T-cell (primary cell): ENCODE measurements at regions of chr10 and their contacts with region 1.

Region 1: DNA sequence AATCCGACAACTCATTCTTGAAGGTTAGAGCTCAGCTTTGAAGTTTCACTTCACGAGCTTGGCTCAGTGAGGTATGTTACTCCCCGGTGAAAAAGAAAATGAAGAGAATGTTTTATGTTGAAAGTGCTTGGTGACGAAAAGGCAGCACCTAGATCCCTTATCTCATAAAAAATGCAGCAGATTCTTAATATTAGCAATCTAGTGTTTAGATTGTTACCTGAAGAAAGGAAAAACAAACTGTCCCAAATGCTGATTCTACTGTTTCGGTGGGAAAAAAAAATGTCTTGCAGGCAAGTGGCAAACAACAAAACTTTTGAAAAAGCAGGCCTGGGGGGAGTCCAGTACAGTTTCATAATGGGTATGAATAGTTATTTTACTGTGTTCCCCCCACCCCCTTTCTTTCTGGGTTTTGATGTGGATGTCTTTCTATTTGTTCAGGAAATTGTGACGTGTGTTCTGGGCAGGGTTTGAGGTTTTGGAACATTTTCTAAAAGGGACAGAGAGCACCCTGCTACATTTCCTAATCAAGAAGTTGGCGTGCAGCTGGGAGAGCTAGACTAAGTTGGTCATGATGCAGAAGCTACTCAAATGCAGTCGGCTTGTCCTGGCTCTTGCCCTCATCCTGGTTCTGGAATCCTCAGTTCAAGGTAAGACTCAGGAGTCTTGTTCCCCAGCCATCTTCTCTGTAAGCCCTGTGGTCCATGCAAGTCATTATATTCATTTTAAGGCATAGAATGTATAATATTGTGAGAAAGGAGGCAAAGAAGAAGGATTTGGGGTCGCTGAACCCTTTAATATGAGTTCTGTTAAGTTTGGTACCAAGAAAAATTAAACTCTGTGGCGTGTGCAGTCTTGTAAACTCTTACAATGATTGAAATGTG is at the start of gene SRGN:
- DNase-seq: peak; percentile 21 to 93 (median 80)
- ATAC-seq: peak; percentile 69 to 80 (median 76)
- H3K4me3 ChIP-seq: peak within 1 kb of the TSS; percentile 59 to 86
- H3K4me3 Mint-ChIP-seq: peak within 1 kb of the TSS; percentile 79 to 92 (median 86)
- H3K27ac ChIP-seq: peak within 1 kb of the TSS; percentile 98
- H3K27ac Mint-ChIP-seq: peak within 1 kb of the TSS; percentile 95 to 96
- H3K4me1 ChIP-seq: peaks cover 39 to 47% of the 10 kb centered on the region in 2 experiments
- H3K4me1 Mint-ChIP-seq: peaks cover 56 to 61% (median 60%) of the 10 kb centered on the region in 3 donors
- H3K27me3 ChIP-seq: no peaks in the 10 kb centered on the region
- H3K27me3 Mint-ChIP-seq: no peaks in the 10 kb centered on the region
- total RNA-seq, gene SRGN: 91.4 to 271 (median 137) TPM

Region 2: DNA sequence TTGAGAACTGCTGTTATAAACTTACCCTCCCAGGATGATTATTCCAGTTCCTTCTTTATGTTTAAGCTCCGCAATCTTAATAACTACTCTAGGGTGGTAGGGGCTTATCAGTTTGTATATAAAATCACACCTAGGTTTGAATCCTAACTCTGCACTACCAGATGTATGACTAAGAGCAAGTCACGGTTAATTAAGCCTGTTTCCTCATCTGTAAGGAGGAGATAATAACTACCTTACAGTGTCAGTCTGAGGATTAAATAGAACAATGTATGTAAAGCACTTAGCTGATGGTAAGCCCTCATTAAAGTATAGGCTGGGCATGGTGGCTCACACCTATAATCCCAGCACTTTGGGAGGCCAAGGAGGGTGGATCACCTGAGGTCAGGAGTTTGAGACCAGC is 625.3 kb before region 1 on chr10:
- CTCF ChIA-PET with region 1: no interaction called
- POLR2A ChIA-PET with region 1: no interaction called
- DNase-seq: no peak
- ATAC-seq: no peak
- H3K4me3 ChIP-seq: no peak overlapping the region
- H3K4me3 Mint-ChIP-seq: no peak overlapping the region
- H3K27ac ChIP-seq: no peak overlapping the region
- H3K27ac Mint-ChIP-seq: no peak overlapping the region
- H3K4me1 ChIP-seq: no peaks in the 10 kb centered on the region
- H3K4me1 Mint-ChIP-seq: no peaks in the 10 kb centered on the region
- H3K27me3 ChIP-seq: no peaks in the 10 kb centered on the region
- H3K27me3 Mint-ChIP-seq: no peaks in the 10 kb centered on the region

Region 3: GRCh38 chr10:68973975-68974374 is 113.9 kb before region 1 on chr10:
- CTCF ChIA-PET with region 1: interaction called in 1 of 2 experiments, 6 read pairs
- POLR2A ChIA-PET with region 1: interaction called in 1 of 2 experiments, 11 read pairs
- DNase-seq: no peak
- ATAC-seq: no peak
- H3K4me3 ChIP-seq: no peak overlapping the region
- H3K4me3 Mint-ChIP-seq: no peak overlapping the region
- H3K27ac ChIP-seq: no peak overlapping the region
- H3K27ac Mint-ChIP-seq: peak overlapping the region in 1 of 2 donors; percentile 11
- H3K4me1 ChIP-seq: peaks cover 0 to 6% of the 10 kb centered on the region in 2 experiments
- H3K4me1 Mint-ChIP-seq: peaks cover 9 to 10% (median 9%) of the 10 kb centered on the region in 3 donors
- H3K27me3 ChIP-seq: no peaks in the 10 kb centered on the region
- H3K27me3 Mint-ChIP-seq: no peaks in the 10 kb centered on the region

Region 4: DNA sequence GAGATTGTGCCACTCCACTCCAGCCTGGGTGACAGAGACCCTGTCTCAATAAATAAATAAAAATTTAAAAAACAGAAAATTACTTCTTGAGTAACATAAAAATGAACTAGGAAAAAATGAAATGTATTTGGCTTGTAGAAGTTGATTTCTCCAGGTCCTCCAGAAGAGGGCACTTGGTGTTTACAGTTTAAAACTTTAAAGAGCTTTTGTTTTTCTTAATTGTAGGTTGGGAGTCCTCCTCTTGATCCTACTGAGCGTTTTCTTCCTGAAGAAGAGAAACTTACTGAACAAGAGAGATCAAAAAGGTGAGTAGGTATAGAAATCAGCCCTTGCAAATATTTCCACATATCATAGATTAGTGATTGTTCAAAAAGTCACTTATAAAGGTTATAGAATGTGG is 83.0 kb before region 1 on chr10:
- CTCF ChIA-PET with region 1: interaction called, 46 to 98 read pairs
- POLR2A ChIA-PET with region 1: interaction called in 1 of 2 experiments, 11 read pairs
- DNase-seq: peak in 3 of 35 experiments; percentile 16 to 68 (median 26)
- ATAC-seq: peak; percentile 59 to 73 (median 60)
- H3K4me3 ChIP-seq: no peak overlapping the region
- H3K4me3 Mint-ChIP-seq: no peak overlapping the region
- H3K27ac ChIP-seq: no peak overlapping the region
- H3K27ac Mint-ChIP-seq: no peak overlapping the region
- H3K4me1 ChIP-seq: no peaks in the 10 kb centered on the region
- H3K4me1 Mint-ChIP-seq: peaks cover 0 to 3% (median 2%) of the 10 kb centered on the region in 3 donors
- H3K27me3 ChIP-seq: no peaks in the 10 kb centered on the region
- H3K27me3 Mint-ChIP-seq: no peaks in the 10 kb centered on the region

Region 5: GRCh38 chr10:69045441-69046300 is 42.2 kb before region 1 on chr10:
- CTCF ChIA-PET with region 1: interaction called in 1 of 2 experiments, 4 read pairs
- POLR2A ChIA-PET with region 1: interaction called, 3 to 10 read pairs
- DNase-seq: peak in 21 of 35 experiments; percentile 7 to 66 (median 30)
- ATAC-seq: peak; percentile 71 to 87 (median 78)
- H3K4me3 ChIP-seq: no peak overlapping the region
- H3K4me3 Mint-ChIP-seq: peak overlapping the region; percentile 42 to 63 (median 46)
- H3K27ac ChIP-seq: peak overlapping the region; percentile 93
- H3K27ac Mint-ChIP-seq: peak overlapping the region; percentile 96 to 98
- H3K4me1 ChIP-seq: peaks cover 8 to 46% of the 10 kb centered on the region in 2 experiments
- H3K4me1 Mint-ChIP-seq: peaks cover 24 to 46% (median 34%) of the 10 kb centered on the region in 3 donors
- H3K27me3 ChIP-seq: no peaks in the 10 kb centered on the region
- H3K27me3 Mint-ChIP-seq: no peaks in the 10 kb centered on the region